MCF 10A (cell line): ENCODE measurements at regions of chr18 and their contacts with region 1.

Region 1: DNA sequence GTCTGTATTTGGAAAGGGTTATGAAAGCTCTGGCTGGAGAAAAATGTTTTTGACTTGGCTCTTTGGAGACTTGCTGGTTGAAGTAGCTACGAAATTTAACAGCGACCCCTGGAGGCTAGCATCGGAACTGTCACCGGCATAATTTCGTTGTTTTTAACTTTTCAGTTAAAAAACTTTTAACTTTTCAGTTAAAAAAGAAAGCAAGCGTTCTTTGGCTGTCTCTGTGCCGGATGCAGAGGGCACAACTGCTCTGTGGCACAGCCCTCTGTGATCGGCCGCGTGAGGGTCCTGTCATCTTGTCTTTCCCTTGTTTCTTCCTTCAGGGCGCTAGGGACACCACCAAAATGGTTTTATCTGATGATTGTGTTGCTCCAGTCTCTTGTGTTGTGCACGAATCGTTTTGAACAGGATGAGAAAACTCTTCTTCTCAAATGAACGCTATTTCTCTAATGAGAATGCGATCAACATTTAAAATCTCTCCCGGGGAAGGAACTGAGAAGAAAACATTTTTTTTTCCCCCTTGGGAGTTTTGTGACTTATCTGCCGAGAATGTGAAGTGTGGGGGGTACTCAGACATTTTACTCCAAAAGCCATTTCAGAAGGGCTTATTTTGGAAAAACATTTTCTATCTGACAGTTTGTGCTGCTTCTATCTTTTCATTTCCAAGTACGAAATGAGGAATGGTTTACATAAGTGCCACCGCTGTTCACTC is 57.1 kb downstream of the ADCYAP1 start:
- DNase-seq: peak; percentile 43
- H3K4me3 Mint-ChIP-seq: peak overlapping the region; percentile 47
- H3K27ac Mint-ChIP-seq: no peak overlapping the region
- H3K4me1 Mint-ChIP-seq: peaks cover 11% of the 10 kb centered on the region
- H3K27me3 Mint-ChIP-seq: peaks cover 11% of the 10 kb centered on the region
- CTCF ChIP-seq: peak; percentile 85

Region 2: GRCh38 chr18:902229-902628 is 59.6 kb before region 1 on chr18:
- CTCF ChIA-PET with region 1: interaction called, 12 read pairs
- POLR2A ChIA-PET with region 1: no interaction called
- intact Hi-C with region 1: loop called (anchors 1 kb)
- DNase-seq: no peak
- H3K4me3 Mint-ChIP-seq: no peak overlapping the region
- H3K27ac Mint-ChIP-seq: no peak overlapping the region
- H3K4me1 Mint-ChIP-seq: no peaks in the 10 kb centered on the region
- H3K27me3 Mint-ChIP-seq: peaks cover 47% of the 10 kb centered on the region
- CTCF ChIP-seq: peak; percentile 32

Region 3: GRCh38 chr18:939167-939566 is 22.6 kb before region 1 on chr18:
- CTCF ChIA-PET with region 1: no interaction called
- POLR2A ChIA-PET with region 1: no interaction called
- intact Hi-C with region 1: no loop called
- DNase-seq: peak; percentile 37
- H3K4me3 Mint-ChIP-seq: no peak overlapping the region
- H3K27ac Mint-ChIP-seq: peak overlapping the region; percentile 14
- H3K4me1 Mint-ChIP-seq: peaks cover 8% of the 10 kb centered on the region
- H3K27me3 Mint-ChIP-seq: no peaks in the 10 kb centered on the region
- CTCF ChIP-seq: no peak

Region 4: DNA sequence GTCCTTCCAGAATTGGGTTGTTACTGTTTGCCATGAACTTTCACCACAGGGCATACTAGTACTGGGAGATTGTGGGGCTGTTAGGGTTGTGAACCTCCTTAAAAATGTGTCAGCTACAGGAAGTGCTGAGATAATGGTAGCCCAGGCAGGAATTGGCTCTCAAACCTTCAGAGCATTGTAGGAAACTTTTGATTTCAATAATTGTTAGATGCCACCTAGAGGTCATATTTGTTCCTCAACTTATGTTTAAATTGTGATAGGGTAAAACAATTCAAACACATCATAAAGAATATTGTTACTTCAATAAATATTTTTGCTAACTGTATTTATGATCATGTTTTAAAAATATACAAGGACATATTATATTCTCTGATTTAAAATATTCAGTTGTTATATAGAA is 537.5 kb after region 1 on chr18:
- CTCF ChIA-PET with region 1: no interaction called
- POLR2A ChIA-PET with region 1: no interaction called
- intact Hi-C with region 1: loop called (anchors 2 kb)
- DNase-seq: no peak
- H3K4me3 Mint-ChIP-seq: no peak overlapping the region
- H3K27ac Mint-ChIP-seq: no peak overlapping the region
- H3K4me1 Mint-ChIP-seq: no peaks in the 10 kb centered on the region
- H3K27me3 Mint-ChIP-seq: no peaks in the 10 kb centered on the region
- CTCF ChIP-seq: no peak